ENCODE measurements at regions of chr17 and their contacts with region 1.

Region 1: DNA sequence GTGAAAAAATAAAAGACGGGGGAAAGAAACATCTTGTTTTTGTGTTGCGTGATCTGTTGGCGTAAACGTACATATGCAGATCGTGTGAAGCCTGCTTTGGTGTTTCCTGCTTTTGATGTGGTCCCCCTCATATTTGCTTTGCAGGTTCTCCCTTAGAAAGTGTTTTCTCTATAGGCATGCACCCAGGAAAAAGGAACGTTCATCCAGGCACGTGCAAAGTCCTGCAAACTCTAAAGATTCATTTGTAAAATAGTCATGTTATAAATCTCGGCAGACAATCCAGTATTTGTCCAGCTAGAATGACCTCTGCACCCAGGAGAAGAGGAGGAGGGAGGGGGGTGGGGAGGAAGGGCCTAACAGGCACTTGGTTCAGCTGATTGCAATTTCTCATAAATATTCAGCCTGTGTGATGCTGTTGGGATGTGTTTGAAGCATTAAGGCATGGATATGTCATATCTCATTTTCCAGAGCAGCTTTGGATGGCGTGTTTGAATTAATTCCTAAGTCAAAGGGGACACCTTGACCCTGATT is 40.3 kb upstream of the DDX52 start:
- DNase-seq: no peak
- ATAC-seq: no peak

Region 2: GRCh38 chr17:37729905-37730304 is 46.4 kb after region 1 on chr17:
- intact Hi-C with region 1: loop called in 1 of 2 experiments (anchors 5 kb)
- DNase-seq: no peak
- ATAC-seq: no peak

Measured in left cardiac atrium (tissue), 4 donors.